ENCODE measurements at regions of chr1 and their contacts with region 1.

Region 1: DNA sequence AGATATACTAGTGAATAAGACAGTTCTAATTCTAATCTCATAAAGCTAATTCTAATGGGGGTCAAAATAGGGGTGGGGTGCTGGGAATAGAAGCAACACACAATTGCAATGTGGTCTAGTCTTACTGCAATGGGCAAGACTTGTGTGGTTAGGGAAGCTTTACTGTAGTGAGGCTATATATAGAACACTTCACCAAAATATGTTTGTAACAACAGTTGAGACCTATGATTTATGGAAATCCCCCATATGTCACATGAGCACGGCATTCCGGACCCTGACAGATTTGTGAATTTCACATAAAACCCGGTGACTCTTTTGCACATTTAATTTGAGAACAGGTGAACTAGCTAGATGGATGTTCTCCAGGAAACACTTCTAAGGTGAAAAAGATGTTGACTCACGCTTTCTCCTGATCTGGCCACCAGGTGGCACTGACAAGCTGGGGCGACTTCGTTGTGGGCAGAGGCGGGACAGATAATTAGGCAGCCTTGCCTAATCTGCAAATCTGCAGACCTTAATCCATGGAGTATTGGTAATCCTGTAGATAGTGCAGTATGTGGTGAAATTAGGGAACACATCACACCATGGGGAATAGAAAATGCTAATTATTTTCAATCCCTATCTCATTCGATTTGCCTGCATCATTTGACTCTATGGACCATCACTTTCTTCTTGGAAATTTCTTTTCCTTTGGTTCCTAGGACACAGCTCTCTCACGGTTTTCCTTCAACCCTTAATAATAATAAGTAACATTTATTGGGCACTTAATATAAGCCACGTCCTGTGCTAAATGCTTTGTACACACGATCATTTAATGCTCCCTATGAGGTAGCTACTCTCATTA is 37.7 kb downstream of the KIAA0040 start:
- DNase-seq: peak; percentile 70
- H3K4me3 ChIP-seq: no peak overlapping the region
- H3K27ac ChIP-seq: no peak overlapping the region
- H3K4me1 ChIP-seq: no peaks in the 10 kb centered on the region
- H3K27me3 ChIP-seq: no peaks in the 10 kb centered on the region
- CTCF ChIP-seq: peak; percentile 92

Region 2: GRCh38 chr1:174743654-174744561 is 410.9 kb before region 1 on chr1:
- CTCF ChIA-PET with region 1: interaction called, 17 read pairs
- POLR2A ChIA-PET with region 1: no interaction called
- intact Hi-C with region 1: no loop called
- DNase-seq: peak; percentile 60
- H3K4me3 ChIP-seq: no peak overlapping the region
- H3K27ac ChIP-seq: no peak overlapping the region
- H3K4me1 ChIP-seq: no peaks in the 10 kb centered on the region
- H3K27me3 ChIP-seq: no peaks in the 10 kb centered on the region
- CTCF ChIP-seq: peak; percentile 74

Region 3: GRCh38 chr1:175040324-175040879 is 114.4 kb before region 1 on chr1:
- CTCF ChIA-PET with region 1: no interaction called
- POLR2A ChIA-PET with region 1: no interaction called
- intact Hi-C with region 1: no loop called
- DNase-seq: no peak
- H3K4me3 ChIP-seq: no peak overlapping the region
- H3K27ac ChIP-seq: no peak overlapping the region
- H3K4me1 ChIP-seq: no peaks in the 10 kb centered on the region
- H3K27me3 ChIP-seq: no peaks in the 10 kb centered on the region
- CTCF ChIP-seq: no peak

Region 4: GRCh38 chr1:175124861-175125260 is 30.0 kb before region 1 on chr1:
- CTCF ChIA-PET with region 1: interaction called, 10 read pairs
- POLR2A ChIA-PET with region 1: no interaction called
- intact Hi-C with region 1: no loop called
- DNase-seq: no peak
- H3K4me3 ChIP-seq: no peak overlapping the region
- H3K27ac ChIP-seq: no peak overlapping the region
- H3K4me1 ChIP-seq: peaks cover 9% of the 10 kb centered on the region
- H3K27me3 ChIP-seq: no peaks in the 10 kb centered on the region
- CTCF ChIP-seq: no peak

Region 5: GRCh38 chr1:175413367-175413766 is 258.5 kb after region 1 on chr1:
- CTCF ChIA-PET with region 1: no interaction called
- POLR2A ChIA-PET with region 1: interaction called, 11 read pairs
- intact Hi-C with region 1: no loop called
- DNase-seq: no peak
- H3K4me3 ChIP-seq: no peak overlapping the region
- H3K27ac ChIP-seq: no peak overlapping the region
- H3K4me1 ChIP-seq: no peaks in the 10 kb centered on the region
- H3K27me3 ChIP-seq: no peaks in the 10 kb centered on the region
- CTCF ChIP-seq: no peak

Region 6: DNA sequence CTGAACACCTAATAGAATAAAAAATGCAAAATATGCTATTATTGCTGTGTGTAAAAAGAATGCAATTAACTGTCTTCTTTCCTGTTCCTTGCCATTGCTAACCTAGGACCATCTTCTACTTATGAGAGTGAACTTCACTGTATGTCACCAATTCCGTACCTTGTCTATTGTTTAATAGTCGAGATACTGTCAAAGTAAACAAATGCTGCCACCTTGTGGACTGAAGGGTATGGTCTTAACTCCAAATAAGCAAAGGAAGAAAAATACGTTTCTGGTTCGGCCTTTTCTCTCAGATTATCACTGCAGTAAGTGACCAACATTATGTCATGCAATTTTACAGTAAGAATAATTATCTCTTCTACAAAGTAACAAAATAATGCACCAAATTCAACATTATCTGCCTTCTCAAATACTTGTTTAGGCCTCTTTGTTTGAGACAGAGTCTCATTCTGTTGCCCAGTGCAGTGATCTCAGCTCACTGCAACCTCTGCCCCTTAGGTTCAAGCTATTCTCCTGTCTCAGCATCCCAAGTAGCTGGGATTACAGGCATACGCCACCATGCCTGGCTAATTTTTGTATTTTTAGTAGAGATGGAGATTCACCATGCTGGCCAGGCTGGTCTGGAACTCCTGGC is 918.8 kb after region 1 on chr1:
- CTCF ChIA-PET with region 1: no interaction called
- POLR2A ChIA-PET with region 1: no interaction called
- intact Hi-C with region 1: loop called (anchors 2 kb)
- DNase-seq: peak; percentile 77
- H3K4me3 ChIP-seq: no peak overlapping the region
- H3K27ac ChIP-seq: no peak overlapping the region
- H3K4me1 ChIP-seq: no peaks in the 10 kb centered on the region
- H3K27me3 ChIP-seq: no peaks in the 10 kb centered on the region
- CTCF ChIP-seq: peak; percentile 77

Measured in A673 (cell line).